CD4-positive, alpha-beta memory T cell (primary cell): ENCODE measurements at regions of chr9 and their contacts with region 1.

Region 1: GRCh38 chr9:34403554-34404380 is 27.1 kb upstream of the MYORG start:
- DNase-seq: peak; percentile 34 to 53 (median 43)
- H3K4me3 ChIP-seq: no peak overlapping the region
- H3K4me3 Mint-ChIP-seq: no peak overlapping the region
- H3K27ac ChIP-seq: no peak overlapping the region
- H3K27ac Mint-ChIP-seq: peak overlapping the region in 1 of 7 donors; percentile 52
- H3K4me1 ChIP-seq: no peaks in the 10 kb centered on the region
- H3K4me1 Mint-ChIP-seq: no peaks in the 10 kb centered on the region
- H3K27me3 ChIP-seq: no peaks in the 10 kb centered on the region
- H3K27me3 Mint-ChIP-seq: no peaks in the 10 kb centered on the region

Region 2: DNA sequence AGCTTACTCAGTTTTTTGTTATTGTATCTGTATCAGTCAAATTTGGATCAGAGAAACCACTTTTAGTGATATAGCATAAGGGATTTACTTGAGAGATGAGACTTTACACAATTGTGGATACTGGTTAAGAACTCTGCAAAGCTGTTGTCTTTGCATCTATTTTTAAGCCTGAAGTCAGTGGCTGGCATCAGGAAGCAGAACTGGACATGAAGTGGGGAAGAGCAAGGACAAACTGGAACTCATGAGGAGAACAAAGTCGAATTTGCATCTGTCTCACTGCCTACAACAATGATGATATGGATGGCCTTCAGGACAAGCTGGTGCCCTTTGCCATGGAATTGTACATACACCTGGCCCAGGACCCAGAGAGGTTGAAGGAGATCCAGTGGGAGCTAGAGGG is 11.3 kb before region 1 on chr9:
- CTCF ChIA-PET with region 1: interaction called, 11 read pairs
- POLR2A ChIA-PET with region 1: no interaction called
- intact Hi-C with region 1: no loop called
- DNase-seq: no peak
- H3K4me3 ChIP-seq: no peak overlapping the region
- H3K4me3 Mint-ChIP-seq: no peak overlapping the region
- H3K27ac ChIP-seq: no peak overlapping the region
- H3K27ac Mint-ChIP-seq: no peak overlapping the region
- H3K4me1 ChIP-seq: no peaks in the 10 kb centered on the region
- H3K4me1 Mint-ChIP-seq: no peaks in the 10 kb centered on the region
- H3K27me3 ChIP-seq: no peaks in the 10 kb centered on the region
- H3K27me3 Mint-ChIP-seq: no peaks in the 10 kb centered on the region

Region 3: GRCh38 chr9:34419716-34420504 is 16.1 kb after region 1 on chr9:
- CTCF ChIA-PET with region 1: interaction called, 26 read pairs
- POLR2A ChIA-PET with region 1: no interaction called
- intact Hi-C with region 1: no loop called
- DNase-seq: no peak
- H3K4me3 ChIP-seq: no peak overlapping the region
- H3K4me3 Mint-ChIP-seq: no peak overlapping the region
- H3K27ac ChIP-seq: no peak overlapping the region
- H3K27ac Mint-ChIP-seq: peak overlapping the region in 1 of 7 donors; percentile 38
- H3K4me1 ChIP-seq: no peaks in the 10 kb centered on the region
- H3K4me1 Mint-ChIP-seq: peaks cover 0 to 3% (median 0%) of the 10 kb centered on the region in 4 donors
- H3K27me3 ChIP-seq: no peaks in the 10 kb centered on the region
- H3K27me3 Mint-ChIP-seq: no peaks in the 10 kb centered on the region

Region 4: GRCh38 chr9:34430843-34431437 is 27.2 kb after region 1 on chr9:
- CTCF ChIA-PET with region 1: interaction called, 16 read pairs
- POLR2A ChIA-PET with region 1: no interaction called
- intact Hi-C with region 1: no loop called
- DNase-seq: peak in 1 of 5 donors; percentile 9
- H3K4me3 ChIP-seq: no peak overlapping the region
- H3K4me3 Mint-ChIP-seq: no peak overlapping the region
- H3K27ac ChIP-seq: no peak overlapping the region
- H3K27ac Mint-ChIP-seq: no peak overlapping the region
- H3K4me1 ChIP-seq: no peaks in the 10 kb centered on the region
- H3K4me1 Mint-ChIP-seq: peaks cover 0 to 3% (median 0%) of the 10 kb centered on the region in 4 donors
- H3K27me3 ChIP-seq: no peaks in the 10 kb centered on the region
- H3K27me3 Mint-ChIP-seq: no peaks in the 10 kb centered on the region

Region 5: DNA sequence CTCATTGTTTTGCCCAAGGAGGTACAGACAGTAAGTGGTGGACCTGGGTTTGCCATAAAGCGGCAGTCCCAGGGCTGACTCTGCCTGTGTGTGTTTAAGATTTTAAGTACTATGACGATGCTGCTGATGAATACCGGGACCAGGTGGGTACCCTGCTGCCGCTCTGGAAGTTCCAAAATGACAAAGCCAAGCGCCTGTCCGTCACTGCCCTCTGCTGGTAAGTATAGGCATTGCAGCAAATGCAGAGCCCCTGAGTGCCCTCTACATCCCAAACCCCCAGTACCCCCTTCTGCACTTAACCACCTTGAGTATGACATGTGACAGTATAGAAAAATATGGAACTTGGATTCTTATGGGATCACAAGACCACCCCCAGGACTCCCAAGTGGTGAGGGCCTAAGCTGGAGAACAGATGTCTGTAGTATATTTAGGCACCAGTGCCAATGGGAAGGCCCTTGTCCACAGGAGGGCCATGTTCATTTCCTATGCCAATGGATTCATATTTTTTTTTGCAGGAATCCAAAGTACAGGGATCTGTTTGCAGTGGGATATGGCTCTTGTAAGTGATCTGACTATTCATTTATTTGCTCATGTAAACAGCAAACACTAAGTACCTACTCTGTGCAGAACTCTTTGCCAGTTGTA is 97.0 kb after region 1 on chr9:
- CTCF ChIA-PET with region 1: interaction called, 65 read pairs
- POLR2A ChIA-PET with region 1: no interaction called
- intact Hi-C with region 1: loop called (anchors 1 kb)
- DNase-seq: peak; percentile 54 to 69 (median 62)
- H3K4me3 ChIP-seq: no peak overlapping the region
- H3K4me3 Mint-ChIP-seq: no peak overlapping the region
- H3K27ac ChIP-seq: no peak overlapping the region
- H3K27ac Mint-ChIP-seq: no peak overlapping the region
- H3K4me1 ChIP-seq: no peaks in the 10 kb centered on the region
- H3K4me1 Mint-ChIP-seq: peaks cover 0 to 3% (median 1%) of the 10 kb centered on the region in 4 donors
- H3K27me3 ChIP-seq: no peaks in the 10 kb centered on the region
- H3K27me3 Mint-ChIP-seq: peaks cover 3 to 10% of the 10 kb centered on the region in 2 donors

Region 6: GRCh38 chr9:34603610-34604231 is 200.0 kb after region 1 on chr9:
- CTCF ChIA-PET with region 1: interaction called, 16 read pairs
- POLR2A ChIA-PET with region 1: no interaction called
- intact Hi-C with region 1: no loop called
- DNase-seq: peak; percentile 67 to 78 (median 74)
- H3K4me3 ChIP-seq: no peak overlapping the region
- H3K4me3 Mint-ChIP-seq: no peak overlapping the region
- H3K27ac ChIP-seq: no peak overlapping the region
- H3K27ac Mint-ChIP-seq: no peak overlapping the region
- H3K4me1 ChIP-seq: no peaks in the 10 kb centered on the region
- H3K4me1 Mint-ChIP-seq: peaks cover 0 to 2% (median 0%) of the 10 kb centered on the region in 4 donors
- H3K27me3 ChIP-seq: no peaks in the 10 kb centered on the region
- H3K27me3 Mint-ChIP-seq: peaks cover 0 to 3% of the 10 kb centered on the region in 2 donors

Region 7: GRCh38 chr9:34675048-34675714 is 271.4 kb after region 1 on chr9:
- CTCF ChIA-PET with region 1: no interaction called
- POLR2A ChIA-PET with region 1: no interaction called
- intact Hi-C with region 1: no loop called
- DNase-seq: peak in 4 of 5 donors; percentile 30 to 36 (median 34)
- H3K4me3 ChIP-seq: no peak overlapping the region
- H3K4me3 Mint-ChIP-seq: no peak overlapping the region
- H3K27ac ChIP-seq: no peak overlapping the region
- H3K27ac Mint-ChIP-seq: no peak overlapping the region
- H3K4me1 ChIP-seq: no peaks in the 10 kb centered on the region
- H3K4me1 Mint-ChIP-seq: peaks cover 0 to 4% (median under 1%) of the 10 kb centered on the region in 4 donors
- H3K27me3 ChIP-seq: no peaks in the 10 kb centered on the region
- H3K27me3 Mint-ChIP-seq: no peaks in the 10 kb centered on the region

Region 8: GRCh38 chr9:36407122-36407723 is 2003.5 kb after region 1 on chr9:
- CTCF ChIA-PET with region 1: no interaction called
- POLR2A ChIA-PET with region 1: no interaction called
- intact Hi-C with region 1: no loop called
- DNase-seq: peak; percentile 67 to 73 (median 71)
- H3K4me3 ChIP-seq: no peak overlapping the region
- H3K4me3 Mint-ChIP-seq: no peak overlapping the region
- H3K27ac ChIP-seq: peak overlapping the region; percentile 15
- H3K27ac Mint-ChIP-seq: peak overlapping the region; percentile 33 to 92 (median 70)
- H3K4me1 ChIP-seq: peaks cover 9% of the 10 kb centered on the region
- H3K4me1 Mint-ChIP-seq: peaks cover 11 to 27% (median 19%) of the 10 kb centered on the region in 4 donors
- H3K27me3 ChIP-seq: no peaks in the 10 kb centered on the region
- H3K27me3 Mint-ChIP-seq: no peaks in the 10 kb centered on the region